Naive thymus-derived CD4-positive, alpha-beta T cell (primary cell): ENCODE measurements at regions of chr16 and their contacts with region 1.

Region 1: DNA sequence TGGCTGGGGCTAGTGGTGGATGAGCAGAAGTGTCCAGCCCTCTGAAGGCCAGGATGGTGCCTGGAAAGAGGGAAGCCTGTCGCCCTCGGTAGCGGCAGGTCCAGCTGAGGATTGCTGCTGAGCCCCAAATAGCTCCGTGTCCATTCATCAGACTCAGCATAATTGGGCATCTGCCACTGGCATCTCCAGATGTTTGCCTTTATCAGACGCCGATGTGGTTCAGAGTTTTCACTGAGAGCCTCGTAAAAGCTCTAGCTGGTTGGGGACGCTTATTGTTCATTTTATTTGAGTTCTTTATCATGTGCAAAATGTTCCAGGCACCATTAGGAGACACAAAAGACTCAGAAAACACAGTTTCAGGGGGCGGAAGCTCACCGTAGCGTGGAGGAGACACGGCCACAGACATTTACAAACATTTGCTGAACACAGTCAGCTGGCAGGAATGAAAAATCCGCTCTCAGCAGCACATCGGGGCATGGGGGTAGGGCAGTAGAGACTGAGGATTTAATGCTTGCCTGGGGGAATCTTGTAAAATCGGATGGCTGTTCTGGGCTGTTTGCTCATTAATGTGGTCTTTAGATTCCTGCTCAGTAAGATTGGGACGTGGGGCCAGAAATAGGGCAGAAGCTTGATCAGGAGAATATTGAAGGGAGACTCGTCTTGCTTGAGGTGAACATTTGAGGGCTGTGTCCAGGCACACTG is 41.7 kb downstream of the SMPD3 start:
- DNase-seq: no peak
- ATAC-seq: no peak
- H3K4me3 ChIP-seq: no peak overlapping the region
- H3K4me3 Mint-ChIP-seq: no peak overlapping the region
- H3K27ac ChIP-seq: no peak overlapping the region
- H3K27ac Mint-ChIP-seq: peak overlapping the region in 1 of 9 donors; percentile 28
- H3K4me1 ChIP-seq: peaks cover 3 to 5% of the 10 kb centered on the region in 2 donors
- H3K4me1 Mint-ChIP-seq: peaks cover 0 to 11% (median 5%) of the 10 kb centered on the region in 7 donors
- H3K27me3 ChIP-seq: no peaks in the 10 kb centered on the region
- H3K27me3 Mint-ChIP-seq: peaks cover 0 to 29% (median 0%) of the 10 kb centered on the region in 5 donors

Region 2: GRCh38 chr16:68332411-68333121 is 74.0 kb before region 1 on chr16:
- CTCF ChIA-PET with region 1: no interaction called
- POLR2A ChIA-PET with region 1: no interaction called
- intact Hi-C with region 1: no loop called
- DNase-seq: peak in 2 of 9 donors; percentile 10 to 24
- ATAC-seq: peak; percentile 16
- H3K4me3 ChIP-seq: no peak overlapping the region
- H3K4me3 Mint-ChIP-seq: peak overlapping the region in 7 of 10 donors; percentile 13 to 62 (median 46)
- H3K27ac ChIP-seq: peak overlapping the region; percentile 3
- H3K27ac Mint-ChIP-seq: peak overlapping the region; percentile 30 to 89 (median 67)
- H3K4me1 ChIP-seq: peaks cover 0 to 16% of the 10 kb centered on the region in 2 donors
- H3K4me1 Mint-ChIP-seq: peaks cover 18 to 30% (median 25%) of the 10 kb centered on the region in 7 donors
- H3K27me3 ChIP-seq: no peaks in the 10 kb centered on the region
- H3K27me3 Mint-ChIP-seq: no peaks in the 10 kb centered on the region

Region 3: DNA sequence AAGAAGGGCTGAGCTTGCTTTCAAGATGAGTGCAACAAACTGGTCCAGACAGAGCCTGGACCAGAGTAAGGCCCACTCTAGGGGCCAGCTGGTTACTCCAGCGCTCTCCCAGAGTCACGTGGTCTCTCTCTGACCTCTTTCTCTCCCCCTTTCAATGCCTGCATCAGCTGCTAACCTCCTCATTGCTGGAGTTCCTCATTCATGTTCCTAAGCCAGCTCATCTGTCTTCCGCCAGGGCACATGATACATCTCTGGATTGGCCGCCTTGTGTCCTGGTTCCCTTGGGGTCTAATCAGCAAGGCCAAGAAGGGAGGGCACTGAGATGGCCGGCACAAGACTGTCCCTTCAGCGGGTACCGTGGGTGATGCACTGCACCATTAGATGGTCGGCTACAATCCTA is 105.6 kb after region 1 on chr16:
- CTCF ChIA-PET with region 1: interaction called, 27 read pairs
- POLR2A ChIA-PET with region 1: no interaction called
- intact Hi-C with region 1: no loop called
- DNase-seq: peak in 1 of 9 donors; percentile 1
- ATAC-seq: no peak
- H3K4me3 ChIP-seq: no peak overlapping the region
- H3K4me3 Mint-ChIP-seq: peak overlapping the region in 1 of 10 donors; percentile 41
- H3K27ac ChIP-seq: no peak overlapping the region
- H3K27ac Mint-ChIP-seq: peak overlapping the region in 1 of 9 donors; percentile 10
- H3K4me1 ChIP-seq: peaks cover 0 to 3% of the 10 kb centered on the region in 2 donors
- H3K4me1 Mint-ChIP-seq: peaks cover 0 to 14% (median 3%) of the 10 kb centered on the region in 7 donors
- H3K27me3 ChIP-seq: no peaks in the 10 kb centered on the region
- H3K27me3 Mint-ChIP-seq: peaks cover 0 to 25% (median 0%) of the 10 kb centered on the region in 5 donors

Region 4: GRCh38 chr16:68538880-68539701 is 132.5 kb after region 1 on chr16 and contains the start of gene ZFP90:
- CTCF ChIA-PET with region 1: no interaction called
- POLR2A ChIA-PET with region 1: no interaction called
- intact Hi-C with region 1: no loop called
- DNase-seq: peak; percentile 82 to 91 (median 88)
- ATAC-seq: peak; percentile 94
- H3K4me3 ChIP-seq: peak within 1 kb of the TSS; percentile 66
- H3K4me3 Mint-ChIP-seq: peak within 1 kb of the TSS; percentile 86 to 99 (median 97)
- H3K27ac ChIP-seq: peak within 1 kb of the TSS; percentile 94
- H3K27ac Mint-ChIP-seq: peak within 1 kb of the TSS; percentile 97 to 100 (median 100)
- H3K4me1 ChIP-seq: peaks cover 13 to 14% of the 10 kb centered on the region in 2 donors
- H3K4me1 Mint-ChIP-seq: peaks cover 13 to 32% (median 24%) of the 10 kb centered on the region in 7 donors
- H3K27me3 ChIP-seq: no peaks in the 10 kb centered on the region
- H3K27me3 Mint-ChIP-seq: no peaks in the 10 kb centered on the region
- total RNA-seq, gene ZFP90: 25.7 to 49.4 (median 38.8) TPM